Heart left ventricle (tissue), 16 donors: ENCODE measurements at regions of chr18 and their contacts with region 1.

Region 1: GRCh38 chr18:10242936-10243680 is 211.3 kb upstream of the APCDD1 start:
- DNase-seq: no peak
- ATAC-seq: no peak
- H3K4me3 ChIP-seq: no peak overlapping the region
- H3K27ac ChIP-seq: no peak overlapping the region
- H3K4me1 ChIP-seq: peaks cover 0 to 40% (median 20%) of the 10 kb centered on the region in 12 donors
- H3K27me3 ChIP-seq: peaks cover 0 to 5% (median 0%) of the 10 kb centered on the region in 9 donors
- CTCF ChIP-seq: no peak
- POLR2A ChIP-seq: no peak

Region 2: GRCh38 chr18:9849407-9850281 is 393.5 kb before region 1 on chr18:
- intact Hi-C with region 1: no loop called
- DNase-seq: peak; percentile 43 to 74 (median 66)
- ATAC-seq: peak; percentile 30 to 88 (median 80)
- H3K4me3 ChIP-seq: no peak overlapping the region
- H3K27ac ChIP-seq: peak overlapping the region; percentile 2 to 73 (median 27)
- H3K4me1 ChIP-seq: peaks cover 0 to 56% (median 15%) of the 10 kb centered on the region in 12 donors
- H3K27me3 ChIP-seq: no peaks in the 10 kb centered on the region
- CTCF ChIP-seq: no peak
- POLR2A ChIP-seq: no peak

Region 3: DNA sequence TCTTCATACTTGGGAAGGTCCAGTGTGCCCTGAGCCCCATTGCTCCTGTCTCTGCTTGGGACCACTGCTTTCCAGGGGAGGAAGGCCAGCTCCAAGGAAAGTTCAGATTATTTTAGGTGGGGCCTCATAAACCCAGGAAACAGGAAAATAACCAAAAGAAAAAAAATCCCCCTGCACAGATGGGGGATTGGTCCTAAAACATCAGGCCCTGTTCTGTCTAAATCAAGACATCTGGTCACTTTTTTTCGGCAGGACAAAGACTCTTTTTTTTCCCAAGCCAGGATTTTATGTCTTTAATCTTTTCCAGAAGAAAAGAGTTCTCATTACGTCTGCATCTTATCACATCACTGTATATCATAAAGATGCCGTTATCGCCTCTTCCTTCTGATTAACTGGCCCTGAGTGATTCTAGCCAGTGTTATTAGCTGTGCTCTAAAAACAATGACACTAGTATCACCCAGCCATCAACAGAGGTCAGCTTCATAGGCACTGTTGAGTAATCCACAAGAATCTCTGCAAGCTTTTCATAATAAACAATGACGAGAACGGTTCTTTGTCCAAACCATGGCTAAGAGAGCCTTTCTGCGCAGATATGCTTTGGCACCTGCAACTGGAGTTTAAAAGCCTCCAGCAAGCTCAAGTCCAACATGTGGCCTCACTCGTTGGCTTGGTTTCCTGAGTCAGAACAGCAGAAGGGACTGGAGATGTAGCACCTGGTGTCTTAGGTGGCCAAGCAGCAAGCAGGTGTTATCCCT is 191.1 kb before region 1 on chr18:
- intact Hi-C with region 1: loop called in 2 of 10 experiments (anchors 5 to 10 kb)
- DNase-seq: peak in 4 of 5 donors; percentile 50 to 75 (median 63)
- ATAC-seq: peak; percentile 57 to 88 (median 86)
- H3K4me3 ChIP-seq: no peak overlapping the region
- H3K27ac ChIP-seq: peak overlapping the region in 11 of 12 donors; percentile 42 to 78 (median 65)
- H3K4me1 ChIP-seq: peaks cover 0 to 31% (median 6%) of the 10 kb centered on the region in 12 donors
- H3K27me3 ChIP-seq: no peaks in the 10 kb centered on the region
- CTCF ChIP-seq: no peak
- POLR2A ChIP-seq: no peak

Region 4: GRCh38 chr18:10057894-10058791 is 185.0 kb before region 1 on chr18:
- intact Hi-C with region 1: loop called in 2 of 10 experiments (anchors 5 to 10 kb)
- DNase-seq: no peak
- ATAC-seq: peak in 3 of 4 donors; percentile 29 to 43 (median 30)
- H3K4me3 ChIP-seq: no peak overlapping the region
- H3K27ac ChIP-seq: peak overlapping the region in 11 of 12 donors; percentile 17 to 88 (median 63)
- H3K4me1 ChIP-seq: peaks cover 0 to 69% (median 44%) of the 10 kb centered on the region in 12 donors
- H3K27me3 ChIP-seq: no peaks in the 10 kb centered on the region
- CTCF ChIP-seq: no peak
- POLR2A ChIP-seq: no peak

Region 5: GRCh38 chr18:10289951-10290637 is 47.0 kb after region 1 on chr18:
- intact Hi-C with region 1: no loop called
- DNase-seq: no peak
- ATAC-seq: peak in 1 of 4 donors; percentile 53
- H3K4me3 ChIP-seq: no peak overlapping the region
- H3K27ac ChIP-seq: peak overlapping the region in 1 of 12 donors; percentile 38
- H3K4me1 ChIP-seq: peaks cover 0 to 17% (median 0%) of the 10 kb centered on the region in 12 donors
- H3K27me3 ChIP-seq: no peaks in the 10 kb centered on the region
- CTCF ChIP-seq: no peak
- POLR2A ChIP-seq: no peak

Region 6: DNA sequence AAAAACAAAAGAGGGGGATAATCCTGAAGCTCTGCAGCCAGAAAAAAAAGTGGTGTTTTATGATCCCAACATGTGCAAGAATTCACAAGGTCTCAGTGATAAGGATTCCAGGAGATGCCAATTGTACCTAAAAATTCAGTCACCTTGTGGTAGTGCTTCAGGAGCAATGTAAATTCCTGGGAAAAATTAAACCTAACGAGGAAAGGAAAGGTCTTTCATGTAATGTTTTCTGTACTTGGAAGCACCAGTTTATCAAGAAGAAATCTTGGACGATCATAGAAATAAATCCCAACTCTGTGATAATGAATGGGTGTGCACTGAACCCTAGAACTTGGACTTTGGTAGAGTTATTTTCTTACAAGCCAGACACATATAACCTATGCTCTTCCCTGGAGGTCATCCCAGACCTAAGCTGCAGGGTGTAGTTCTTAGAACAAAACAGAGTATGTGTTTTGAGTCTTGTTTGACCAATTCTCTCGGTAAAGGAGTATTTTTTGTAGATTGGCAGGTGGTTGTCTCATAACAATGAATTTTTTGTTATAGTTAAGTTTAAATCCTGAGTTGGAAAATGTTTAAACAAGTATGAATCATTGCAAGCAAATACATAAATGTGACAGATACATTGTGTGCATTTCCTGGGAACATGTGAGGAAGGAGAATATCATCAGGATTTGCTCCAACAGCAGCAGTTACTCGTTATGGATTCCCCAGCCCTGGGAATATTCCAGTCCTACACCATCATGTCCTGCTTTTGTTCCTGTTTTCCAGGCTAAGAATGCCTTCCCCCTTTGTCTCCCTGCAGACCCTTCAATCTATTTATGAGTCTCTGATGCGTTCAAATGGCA is 507.3 kb after region 1 on chr18:
- intact Hi-C with region 1: no loop called
- DNase-seq: no peak
- ATAC-seq: no peak
- H3K4me3 ChIP-seq: no peak overlapping the region
- H3K27ac ChIP-seq: no peak overlapping the region
- H3K4me1 ChIP-seq: no peaks in the 10 kb centered on the region
- H3K27me3 ChIP-seq: peaks cover 0 to 3% (median 0%) of the 10 kb centered on the region in 9 donors
- CTCF ChIP-seq: no peak
- POLR2A ChIP-seq: no peak